ENCODE measurements at regions of chr17 and their contacts with region 1.

Region 1: GRCh38 chr17:39235555-39236449 is 10.1 kb upstream of the STAC2 start:
- DNase-seq: peak; percentile 53 to 66 (median 56)
- H3K4me3 ChIP-seq: no peak overlapping the region
- H3K4me3 Mint-ChIP-seq: peak overlapping the region in 2 of 8 donors; percentile 50 to 73
- H3K27ac ChIP-seq: no peak overlapping the region
- H3K27ac Mint-ChIP-seq: peak overlapping the region; percentile 61 to 93 (median 82)
- H3K4me1 ChIP-seq: peaks cover 43% of the 10 kb centered on the region
- H3K4me1 Mint-ChIP-seq: peaks cover 31 to 45% (median 38%) of the 10 kb centered on the region in 4 donors
- H3K27me3 ChIP-seq: no peaks in the 10 kb centered on the region
- H3K27me3 Mint-ChIP-seq: peaks cover 4 to 11% of the 10 kb centered on the region in 2 donors

Region 2: DNA sequence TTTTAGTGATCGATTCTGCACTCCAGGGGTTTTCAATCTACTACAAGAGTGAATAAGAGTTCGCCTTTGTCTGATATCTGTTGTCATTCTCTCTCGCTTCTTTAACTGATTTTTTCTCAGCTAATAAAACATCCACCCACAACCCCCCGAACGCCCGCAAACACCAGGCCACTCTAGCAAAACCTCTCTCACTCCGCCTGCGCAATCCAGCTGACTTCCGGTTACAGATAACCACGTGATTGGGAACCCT is 36.1 kb before region 1 on chr17:
- CTCF ChIA-PET with region 1: interaction called, 554 read pairs
- POLR2A ChIA-PET with region 1: interaction called, 50 read pairs
- intact Hi-C with region 1: loop called (anchors 5 kb)
- DNase-seq: peak in 4 of 5 donors; percentile 92 to 94 (median 92)
- H3K4me3 ChIP-seq: peak overlapping the region; percentile 77 to 93
- H3K4me3 Mint-ChIP-seq: peak overlapping the region; percentile 86 to 98 (median 96)
- H3K27ac ChIP-seq: peak overlapping the region; percentile 98
- H3K27ac Mint-ChIP-seq: peak overlapping the region; percentile 96 to 100 (median 100)
- H3K4me1 ChIP-seq: peaks cover 58% of the 10 kb centered on the region
- H3K4me1 Mint-ChIP-seq: peaks cover 37 to 73% (median 58%) of the 10 kb centered on the region in 4 donors
- H3K27me3 ChIP-seq: no peaks in the 10 kb centered on the region
- H3K27me3 Mint-ChIP-seq: no peaks in the 10 kb centered on the region

Region 3: DNA sequence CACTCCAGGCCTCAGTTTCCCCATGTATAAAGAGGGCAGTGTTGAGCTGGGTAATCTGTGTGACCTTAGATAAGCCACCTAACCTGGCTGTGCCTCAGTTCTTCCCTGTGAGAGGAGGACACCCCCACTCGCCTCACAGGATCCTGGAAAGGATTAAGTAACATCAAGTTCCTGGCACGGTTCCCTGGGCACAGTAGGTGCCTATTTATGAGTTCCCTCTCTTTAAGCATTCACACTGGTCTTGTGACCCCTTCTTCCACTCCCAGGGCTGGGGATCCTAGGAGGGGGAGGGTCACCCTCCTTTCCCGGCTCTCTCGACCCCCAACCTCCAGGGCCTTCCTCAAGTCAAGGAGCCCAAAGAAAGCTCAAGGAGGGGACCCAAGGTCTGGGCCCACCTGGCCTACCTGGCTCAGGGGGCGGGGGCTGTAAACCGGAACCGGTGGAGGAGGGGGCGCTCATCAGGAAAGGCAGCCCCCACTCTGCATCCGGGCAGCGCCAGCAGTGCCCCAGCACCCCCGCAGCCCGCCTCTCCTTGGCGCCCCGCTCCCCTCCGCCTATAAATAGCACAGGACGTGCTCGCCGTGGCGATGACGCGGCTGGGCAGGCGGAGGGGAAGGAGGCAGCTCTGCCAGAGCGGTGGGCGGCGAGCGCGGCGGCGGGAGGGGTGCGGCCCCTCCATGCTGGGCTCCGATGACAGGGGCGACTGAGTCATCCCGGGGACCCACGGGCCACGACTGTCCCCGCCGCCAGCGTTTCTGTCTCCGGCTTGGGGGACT is 26.3 kb before region 1 on chr17:
- CTCF ChIA-PET with region 1: interaction called, 554 read pairs
- POLR2A ChIA-PET with region 1: interaction called, 54 read pairs
- intact Hi-C with region 1: loop called (anchors 1 kb)
- DNase-seq: peak; percentile 48 to 83 (median 59)
- H3K4me3 ChIP-seq: no peak overlapping the region
- H3K4me3 Mint-ChIP-seq: peak overlapping the region in 7 of 8 donors; percentile 8 to 75 (median 36)
- H3K27ac ChIP-seq: no peak overlapping the region
- H3K27ac Mint-ChIP-seq: peak overlapping the region in 5 of 7 donors; percentile 31 to 86 (median 55)
- H3K4me1 ChIP-seq: peaks cover 24% of the 10 kb centered on the region
- H3K4me1 Mint-ChIP-seq: peaks cover 3 to 32% (median 16%) of the 10 kb centered on the region in 4 donors
- H3K27me3 ChIP-seq: no peaks in the 10 kb centered on the region
- H3K27me3 Mint-ChIP-seq: peaks cover 2% of the 10 kb centered on the region in 2 donors

Region 4: GRCh38 chr17:39219647-39220154 is 16.1 kb before region 1 on chr17:
- CTCF ChIA-PET with region 1: interaction called, 554 read pairs
- POLR2A ChIA-PET with region 1: interaction called, 4 read pairs
- intact Hi-C with region 1: no loop called
- DNase-seq: no peak
- H3K4me3 ChIP-seq: no peak overlapping the region
- H3K4me3 Mint-ChIP-seq: no peak overlapping the region
- H3K27ac ChIP-seq: no peak overlapping the region
- H3K27ac Mint-ChIP-seq: no peak overlapping the region
- H3K4me1 ChIP-seq: peaks cover 2% of the 10 kb centered on the region
- H3K4me1 Mint-ChIP-seq: peaks cover 0 to 10% (median 3%) of the 10 kb centered on the region in 4 donors
- H3K27me3 ChIP-seq: peaks cover 9% of the 10 kb centered on the region
- H3K27me3 Mint-ChIP-seq: peaks cover 20 to 26% of the 10 kb centered on the region in 2 donors

Region 5: DNA sequence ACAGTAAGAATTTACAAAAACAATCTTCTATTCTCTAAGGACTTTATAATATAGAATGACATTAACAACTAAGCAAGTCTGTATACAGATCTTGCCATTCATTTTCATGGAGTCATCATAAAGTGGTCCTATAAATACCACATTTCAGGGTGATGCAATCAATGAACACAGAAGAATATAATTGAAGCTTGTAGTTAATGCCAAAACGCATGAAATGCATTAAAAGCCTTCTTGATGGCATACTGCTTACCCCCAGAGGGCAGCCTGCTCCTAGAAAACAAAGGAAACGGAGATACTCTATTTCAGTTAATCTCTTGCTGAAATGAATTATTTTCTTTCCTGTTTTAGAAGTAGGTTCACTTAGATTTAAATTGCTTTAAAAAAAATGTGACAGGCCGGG is 35.1 kb after region 1 on chr17:
- CTCF ChIA-PET with region 1: no interaction called
- POLR2A ChIA-PET with region 1: no interaction called
- intact Hi-C with region 1: no loop called
- DNase-seq: no peak
- H3K4me3 ChIP-seq: no peak overlapping the region
- H3K4me3 Mint-ChIP-seq: no peak overlapping the region
- H3K27ac ChIP-seq: no peak overlapping the region
- H3K27ac Mint-ChIP-seq: no peak overlapping the region
- H3K4me1 ChIP-seq: no peaks in the 10 kb centered on the region
- H3K4me1 Mint-ChIP-seq: no peaks in the 10 kb centered on the region
- H3K27me3 ChIP-seq: no peaks in the 10 kb centered on the region
- H3K27me3 Mint-ChIP-seq: no peaks in the 10 kb centered on the region